Activated CD4-positive, alpha-beta T cell treated with anti-CD3 and anti-CD28 coated beads for 36 hours (primary cell): ENCODE measurements at regions of chr6 and their contacts with region 1.

Region 1: DNA sequence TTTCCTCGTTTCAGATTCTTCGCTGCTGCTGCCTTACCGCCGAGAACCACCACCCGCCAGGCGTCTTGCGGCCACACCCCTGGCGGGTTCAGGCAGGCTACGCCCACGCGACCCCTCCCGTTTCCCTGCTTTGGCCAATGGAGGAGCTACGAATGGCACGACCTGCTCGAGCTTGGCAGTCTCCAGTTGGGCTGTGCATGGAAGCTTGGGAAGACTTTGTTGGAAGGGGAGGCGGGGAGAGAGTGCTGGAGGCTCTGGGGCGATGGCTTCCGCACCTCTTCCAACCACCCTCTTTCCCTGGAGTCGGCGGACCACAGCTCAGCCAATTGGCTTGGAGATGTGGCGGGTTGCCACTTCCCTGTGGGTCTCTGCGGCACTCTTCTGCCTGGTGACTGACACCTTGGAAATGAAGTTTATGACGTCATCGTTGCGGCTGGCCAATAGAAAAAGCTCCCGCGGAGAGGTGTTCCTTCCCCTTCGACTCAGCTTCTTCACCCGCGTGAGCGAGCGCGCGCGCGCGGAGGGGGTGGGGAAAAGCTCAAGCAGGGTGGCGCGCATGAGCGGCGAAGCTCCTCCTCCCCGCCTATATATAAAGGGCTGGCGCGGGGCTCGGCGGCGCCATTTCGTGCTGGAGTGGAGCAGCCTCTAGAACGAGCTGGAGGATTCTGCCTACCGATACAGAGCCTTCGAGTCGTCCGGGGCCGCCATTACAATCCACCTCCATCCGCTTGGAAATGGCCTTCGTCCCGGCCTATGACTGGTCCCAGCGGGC is 3.4 kb downstream of the BRD2 start:
- DNase-seq: peak; percentile 100
- ATAC-seq: peak; percentile 43
- H3K4me3 Mint-ChIP-seq: peak overlapping the region; percentile 98
- H3K27ac Mint-ChIP-seq: peak overlapping the region; percentile 100
- H3K4me1 Mint-ChIP-seq: peaks cover 27% of the 10 kb centered on the region
- H3K27me3 Mint-ChIP-seq: no peaks in the 10 kb centered on the region

Region 2: DNA sequence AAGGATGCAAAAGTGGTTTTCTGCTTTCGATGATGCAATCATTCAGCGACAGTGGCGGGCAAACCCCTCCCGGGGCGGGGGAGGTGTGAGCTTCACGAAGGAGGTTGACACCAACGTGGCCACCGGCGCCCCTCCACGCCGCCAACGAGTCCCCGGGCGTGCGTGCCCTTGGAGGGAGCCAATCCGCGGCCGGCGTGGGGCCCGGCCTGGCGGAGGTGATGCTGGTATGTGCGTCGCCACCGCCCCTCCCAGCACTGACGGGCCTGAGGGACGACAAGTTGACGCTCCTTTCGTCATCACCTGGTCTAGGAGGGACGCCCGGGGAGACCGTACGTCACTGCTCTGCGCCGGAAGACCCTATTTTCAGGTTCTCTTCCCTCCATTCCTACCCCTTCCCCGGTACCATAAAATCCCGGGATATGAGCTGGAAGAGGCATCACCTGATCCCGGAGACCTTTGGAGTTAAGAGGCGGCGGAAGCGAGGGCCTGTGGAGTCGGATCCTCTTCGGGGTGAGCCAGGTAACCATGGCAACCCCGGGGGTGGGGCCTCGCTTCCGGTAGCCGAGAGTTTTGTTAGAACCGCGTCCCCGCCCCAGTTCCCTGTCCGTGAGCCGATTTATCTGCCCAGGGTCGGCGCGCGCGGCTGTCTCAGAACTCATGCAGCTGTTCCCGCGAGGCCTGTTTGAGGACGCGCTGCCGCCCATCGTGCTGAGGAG is 999.6 kb before region 1 on chr6 and contains the start of gene DXO:
- CTCF ChIA-PET with region 1: no interaction called
- POLR2A ChIA-PET with region 1: no interaction called
- intact Hi-C with region 1: loop called in 1 of 2 experiments (anchors 10 kb)
- DNase-seq: peak; percentile 99
- ATAC-seq: peak; percentile 96
- H3K4me3 Mint-ChIP-seq: peak within 1 kb of the TSS; percentile 96
- H3K27ac Mint-ChIP-seq: peak within 1 kb of the TSS; percentile 99
- H3K4me1 Mint-ChIP-seq: peaks cover 43% of the 10 kb centered on the region
- H3K27me3 Mint-ChIP-seq: no peaks in the 10 kb centered on the region
- total RNA-seq, gene DXO: 12.6 to 13.9 TPM

Region 3: DNA sequence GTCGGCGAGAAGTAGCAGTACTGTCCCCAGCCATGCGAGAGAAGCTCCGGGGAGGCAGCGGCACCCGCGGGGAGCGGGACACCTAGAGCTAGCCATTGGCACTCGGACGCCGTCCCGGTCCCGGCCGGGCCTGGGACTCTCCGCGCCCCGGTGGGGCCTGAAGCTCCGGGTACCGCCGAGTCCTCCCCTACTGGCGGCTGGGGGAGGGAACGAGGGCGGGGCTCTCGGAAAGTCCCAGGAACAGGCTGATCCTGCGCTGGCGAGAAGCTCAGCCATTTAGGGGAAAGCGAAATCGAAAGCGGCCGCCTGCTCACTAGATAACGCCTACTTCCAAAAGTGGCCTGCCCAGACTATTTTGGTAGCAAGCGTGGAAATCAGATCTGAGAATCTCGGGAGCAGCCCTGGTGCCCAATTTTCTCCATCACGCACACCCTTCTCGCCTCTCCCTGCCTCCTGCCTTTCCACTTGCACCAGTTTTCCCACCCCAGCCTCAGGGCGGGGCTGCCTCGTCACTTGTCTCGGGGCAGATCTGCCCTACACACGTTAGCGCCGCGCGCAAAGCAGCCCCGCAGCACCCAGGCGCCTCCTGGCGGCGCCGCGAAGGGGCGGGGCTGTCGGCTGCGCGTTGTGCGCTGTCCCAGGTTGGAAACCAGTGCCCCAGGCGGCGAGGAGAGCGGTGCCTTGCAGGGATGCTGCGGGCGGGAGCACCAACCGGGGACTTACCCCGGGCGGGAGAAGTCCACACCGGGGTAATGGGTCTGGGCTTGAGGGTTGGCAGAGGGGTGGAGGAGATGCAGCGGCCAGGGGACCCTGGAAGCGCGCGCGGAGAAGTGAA is 118.0 kb before region 1 on chr6 and contains the starts of genes PSMB9 and TAP1:
- CTCF ChIA-PET with region 1: interaction called, 16 read pairs
- POLR2A ChIA-PET with region 1: interaction called, 65 read pairs
- intact Hi-C with region 1: loop called (anchors 1 to 2 kb)
- DNase-seq: peak; percentile 98
- ATAC-seq: peak; percentile 84
- H3K4me3 Mint-ChIP-seq: peak within 1 kb of the TSS; percentile 100
- H3K27ac Mint-ChIP-seq: peak within 1 kb of the TSS; percentile 99
- H3K4me1 Mint-ChIP-seq: peaks cover 62% of the 10 kb centered on the region
- H3K27me3 Mint-ChIP-seq: no peaks in the 10 kb centered on the region
- total RNA-seq, gene PSMB9: 210 to 282 TPM
- total RNA-seq, gene TAP1: 191 to 255 TPM

Region 4: GRCh38 chr6:32940656-32941213 is 31.0 kb before region 1 on chr6 and contains the start of gene HLA-DMB:
- CTCF ChIA-PET with region 1: interaction called, 16 read pairs
- POLR2A ChIA-PET with region 1: interaction called, 58 read pairs
- intact Hi-C with region 1: loop called (anchors 1 to 2 kb)
- DNase-seq: peak; percentile 58
- ATAC-seq: peak; percentile 87
- H3K4me3 Mint-ChIP-seq: peak within 1 kb of the TSS; percentile 72
- H3K27ac Mint-ChIP-seq: peak within 1 kb of the TSS; percentile 87
- H3K4me1 Mint-ChIP-seq: peaks cover 55% of the 10 kb centered on the region
- H3K27me3 Mint-ChIP-seq: no peaks in the 10 kb centered on the region
- total RNA-seq, gene HLA-DMB: 1.9 to 2.3 TPM

Region 5: DNA sequence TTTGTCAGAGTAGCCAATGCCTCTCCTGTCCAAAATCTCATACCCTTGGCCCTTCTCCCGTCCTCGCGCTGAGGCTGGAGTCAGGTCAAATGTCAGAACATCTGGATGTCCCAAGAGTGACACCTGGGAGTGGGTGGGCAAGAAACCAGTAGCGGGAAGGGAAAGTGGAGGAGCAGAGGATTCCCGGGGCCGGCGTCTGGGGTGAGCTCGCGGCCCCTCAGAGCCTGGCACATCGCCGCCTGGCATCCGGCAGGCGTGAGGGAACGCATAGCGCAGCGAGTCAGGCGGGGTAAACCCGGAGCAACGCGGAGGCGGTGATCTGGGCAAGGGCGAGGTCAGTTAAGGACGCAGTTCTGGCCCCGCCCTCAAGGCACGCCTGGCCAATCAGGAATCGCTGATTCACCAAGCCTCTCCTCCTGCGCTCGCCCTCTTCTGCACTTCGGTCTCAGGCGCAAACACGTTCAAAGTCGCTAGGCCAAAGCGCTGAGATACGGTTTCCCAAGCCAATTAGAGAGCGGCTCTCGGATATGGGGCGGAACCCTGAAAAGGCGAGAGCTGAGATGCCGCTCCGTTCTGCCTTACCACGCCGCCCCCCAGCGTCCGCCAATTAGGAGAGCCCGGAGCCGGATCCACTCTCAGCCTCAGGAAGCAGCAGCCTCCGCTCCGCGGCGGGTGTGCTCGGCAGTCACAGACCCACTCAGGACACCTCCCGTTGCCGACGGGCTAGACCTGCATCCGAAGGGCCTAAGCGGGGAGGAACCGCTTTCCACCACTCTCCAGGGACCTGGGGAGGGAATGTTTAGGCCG is 277.4 kb after region 1 on chr6:
- CTCF ChIA-PET with region 1: interaction called, 3 read pairs
- POLR2A ChIA-PET with region 1: interaction called, 17 read pairs
- intact Hi-C with region 1: loop called in 1 of 2 experiments (anchors 1 kb)
- DNase-seq: peak; percentile 99
- ATAC-seq: peak; percentile 93
- H3K4me3 Mint-ChIP-seq: peak overlapping the region; percentile 91
- H3K27ac Mint-ChIP-seq: peak overlapping the region; percentile 96
- H3K4me1 Mint-ChIP-seq: peaks cover 41% of the 10 kb centered on the region
- H3K27me3 Mint-ChIP-seq: peaks cover 3% of the 10 kb centered on the region

Region 6: DNA sequence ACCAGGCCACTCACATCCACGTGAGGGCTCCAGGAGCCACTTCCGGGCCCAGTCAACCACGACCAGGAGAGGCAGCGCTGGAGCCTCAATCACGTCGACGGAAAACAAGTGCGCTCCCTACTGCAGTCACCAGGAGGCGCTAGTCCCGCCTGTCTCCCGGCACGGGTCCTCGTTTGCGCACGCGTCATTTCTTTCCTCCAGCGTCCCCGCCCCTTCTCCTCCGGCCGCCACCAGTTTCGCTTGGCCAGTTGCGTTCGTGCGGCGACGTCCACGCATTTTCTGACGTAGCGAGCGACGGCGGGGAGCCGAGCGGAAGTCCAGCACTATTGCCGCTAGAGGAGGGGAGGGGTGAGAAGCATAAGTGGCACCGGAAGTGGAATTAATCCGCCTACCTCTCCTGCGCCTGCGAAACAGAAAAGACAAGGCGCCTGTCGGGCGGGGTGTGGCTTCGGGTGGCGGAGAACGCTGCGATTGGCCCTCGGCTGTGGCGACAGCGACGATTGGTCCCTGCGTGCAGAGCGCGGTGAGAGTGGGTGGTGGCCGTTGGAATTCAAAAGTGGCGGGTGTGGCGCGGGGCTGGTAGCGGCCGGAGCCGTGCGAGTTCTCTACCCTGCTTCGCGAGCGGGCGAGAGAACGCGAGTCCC is 419.6 kb after region 1 on chr6 and contains the start of gene KIFC1:
- CTCF ChIA-PET with region 1: no interaction called
- POLR2A ChIA-PET with region 1: no interaction called
- intact Hi-C with region 1: loop called in 1 of 2 experiments (anchors 1 kb)
- DNase-seq: peak; percentile 100
- ATAC-seq: peak; percentile 90
- H3K4me3 Mint-ChIP-seq: peak within 1 kb of the TSS; percentile 88
- H3K27ac Mint-ChIP-seq: peak within 1 kb of the TSS; percentile 96
- H3K4me1 Mint-ChIP-seq: peaks cover 37% of the 10 kb centered on the region
- H3K27me3 Mint-ChIP-seq: no peaks in the 10 kb centered on the region
- total RNA-seq, gene KIFC1: 86.0 to 89.3 TPM

Region 7: DNA sequence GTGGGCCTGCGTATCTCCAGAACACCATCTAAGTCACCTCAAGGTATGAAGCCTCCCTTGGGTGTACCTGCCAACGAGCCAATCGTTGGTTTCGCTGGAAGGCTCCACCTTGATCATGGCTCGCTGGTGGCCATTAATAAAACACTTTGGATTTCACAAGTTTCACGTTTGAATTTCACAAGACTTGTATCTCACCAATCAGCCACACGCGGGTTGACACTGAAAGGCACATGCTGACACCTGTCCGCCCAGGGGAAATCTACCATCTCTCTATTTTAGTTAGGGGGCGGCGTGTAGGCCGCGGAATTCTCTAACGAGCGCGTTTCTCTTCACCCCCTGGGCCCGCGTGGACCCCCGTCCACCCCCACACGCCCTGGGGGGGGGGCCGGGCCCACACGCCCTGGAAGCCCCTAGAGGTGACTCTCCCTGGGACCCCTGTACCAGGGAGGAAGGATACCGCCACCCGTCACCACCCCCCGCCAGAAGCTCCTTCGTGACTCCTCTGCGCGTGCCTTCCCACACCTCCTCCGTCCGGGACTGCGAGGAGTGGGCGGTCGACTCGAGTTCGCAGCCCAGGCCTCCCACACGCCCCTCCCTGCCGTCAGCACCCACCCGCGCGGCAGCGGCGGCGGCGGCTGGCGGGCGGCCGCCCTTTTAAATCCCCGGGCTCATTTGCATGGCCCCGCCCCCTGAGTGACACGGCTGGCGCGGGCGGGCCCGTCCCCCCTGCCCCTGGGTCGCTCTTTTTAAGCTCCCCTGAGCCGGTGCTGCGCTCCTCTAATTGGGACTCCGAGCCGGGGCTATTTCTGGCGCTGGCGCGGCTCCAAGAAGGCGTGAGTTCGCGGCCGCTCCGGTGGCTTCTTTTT is 1264.6 kb after region 1 on chr6 and contains the start of gene HMGA1:
- CTCF ChIA-PET with region 1: no interaction called
- POLR2A ChIA-PET with region 1: no interaction called
- intact Hi-C with region 1: loop called in 1 of 2 experiments (anchors 5 kb)
- DNase-seq: peak; percentile 94
- ATAC-seq: peak; percentile 70
- H3K4me3 Mint-ChIP-seq: peak within 1 kb of the TSS; percentile 85
- H3K27ac Mint-ChIP-seq: peak within 1 kb of the TSS; percentile 91
- H3K4me1 Mint-ChIP-seq: peaks cover 41% of the 10 kb centered on the region
- H3K27me3 Mint-ChIP-seq: no peaks in the 10 kb centered on the region
- total RNA-seq, gene HMGA1: 569 to 649 TPM